Endothelial cell of umbilical vein (primary cell): ENCODE measurements at regions of chr5 and their contacts with region 1.

Region 1: GRCh38 chr5:122101636-122102285 is 23.7 kb upstream of the LOX start:
- DNase-seq: peak; percentile 64
- H3K4me3 ChIP-seq: no peak overlapping the region
- H3K27ac ChIP-seq: no peak overlapping the region
- H3K4me1 ChIP-seq: peaks cover 8% of the 10 kb centered on the region
- H3K27me3 ChIP-seq: no peaks in the 10 kb centered on the region
- CTCF ChIP-seq: peak; percentile 26 to 49
- POLR2A ChIP-seq: no peak

Region 2: GRCh38 chr5:120655828-120656435 is 1445.8 kb before region 1 on chr5:
- CTCF ChIA-PET with region 1: interaction called, 6 read pairs
- POLR2A ChIA-PET with region 1: no interaction called
- dilution Hi-C with region 1: no loop called
- intact Hi-C with region 1: loop called (anchors 2 kb)
- DNase-seq: peak; percentile 19
- H3K4me3 ChIP-seq: no peak overlapping the region
- H3K27ac ChIP-seq: no peak overlapping the region
- H3K4me1 ChIP-seq: no peaks in the 10 kb centered on the region
- H3K27me3 ChIP-seq: no peaks in the 10 kb centered on the region
- CTCF ChIP-seq: peak; percentile 36 to 57
- POLR2A ChIP-seq: no peak

Region 3: DNA sequence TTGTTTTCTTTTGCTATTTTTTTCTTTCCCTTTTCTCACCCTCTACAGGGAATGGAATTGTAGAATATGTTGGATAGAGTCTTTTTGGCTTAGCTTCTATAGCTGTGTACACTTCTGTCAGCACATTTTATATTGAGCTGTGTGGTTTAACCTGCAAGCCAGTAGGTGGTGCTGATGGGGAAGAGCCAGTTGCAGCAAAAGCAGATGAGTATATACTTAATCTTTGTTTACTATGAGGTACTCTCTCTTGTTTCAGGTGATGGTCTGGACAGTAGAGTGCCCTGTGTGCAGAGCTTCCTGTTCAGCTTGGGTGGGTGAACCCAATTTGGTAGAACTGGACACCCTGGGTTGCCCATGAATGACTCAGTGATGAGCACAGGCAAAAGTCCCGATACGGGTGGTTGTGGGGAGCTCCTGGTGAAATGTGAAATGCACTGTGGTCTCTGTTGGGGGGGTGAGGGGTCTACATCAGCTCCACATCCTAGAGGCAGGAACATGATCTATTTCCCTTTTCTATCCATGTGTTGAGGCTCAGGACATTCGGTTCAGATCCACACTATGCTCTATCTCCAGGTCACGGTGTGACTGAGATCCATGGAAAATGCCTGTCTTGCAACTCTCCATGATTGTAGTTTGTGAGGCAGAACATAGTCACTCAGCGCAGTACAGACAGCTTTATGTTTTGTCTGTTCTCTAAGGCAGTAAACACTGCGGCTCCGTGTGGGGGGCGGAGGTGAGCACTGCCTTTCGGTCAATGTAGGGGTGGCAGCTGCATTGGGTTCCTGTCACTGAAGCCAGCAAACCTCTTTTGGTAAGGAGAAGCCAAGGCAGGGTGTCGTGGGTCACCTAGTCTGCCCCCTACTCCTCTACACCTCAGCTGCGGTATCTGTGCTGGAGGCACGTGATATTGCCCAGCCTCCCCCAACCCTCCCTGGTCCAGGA is 1284.4 kb before region 1 on chr5:
- CTCF ChIA-PET with region 1: interaction called, 5 read pairs
- POLR2A ChIA-PET with region 1: no interaction called
- dilution Hi-C with region 1: no loop called
- intact Hi-C with region 1: loop called (anchors 5 kb)
- DNase-seq: peak; percentile 17
- H3K4me3 ChIP-seq: no peak overlapping the region
- H3K27ac ChIP-seq: no peak overlapping the region
- H3K4me1 ChIP-seq: no peaks in the 10 kb centered on the region
- H3K27me3 ChIP-seq: no peaks in the 10 kb centered on the region
- CTCF ChIP-seq: peak; percentile 31 to 46
- POLR2A ChIP-seq: no peak

Region 4: GRCh38 chr5:121962347-121962670 is 139.5 kb before region 1 on chr5:
- CTCF ChIA-PET with region 1: interaction called, 76 read pairs
- POLR2A ChIA-PET with region 1: no interaction called
- dilution Hi-C with region 1: no loop called
- intact Hi-C with region 1: loop called (anchors 1 kb)
- DNase-seq: peak; percentile 42
- H3K4me3 ChIP-seq: peak overlapping the region; percentile 79 to 95 (median 88)
- H3K27ac ChIP-seq: peak overlapping the region; percentile 86
- H3K4me1 ChIP-seq: peaks cover 14% of the 10 kb centered on the region
- H3K27me3 ChIP-seq: peaks cover 4 to 5% of the 10 kb centered on the region in 2 experiments
- CTCF ChIP-seq: no peak
- POLR2A ChIP-seq: no peak

Region 5: GRCh38 chr5:122063836-122064235 is 37.9 kb before region 1 on chr5:
- CTCF ChIA-PET with region 1: interaction called, 10 read pairs
- POLR2A ChIA-PET with region 1: no interaction called
- dilution Hi-C with region 1: no loop called
- intact Hi-C with region 1: no loop called
- DNase-seq: peak; percentile 41
- H3K4me3 ChIP-seq: no peak overlapping the region
- H3K27ac ChIP-seq: no peak overlapping the region
- H3K4me1 ChIP-seq: peaks cover 4% of the 10 kb centered on the region
- H3K27me3 ChIP-seq: no peaks in the 10 kb centered on the region
- CTCF ChIP-seq: no peak
- POLR2A ChIP-seq: no peak

Region 6: GRCh38 chr5:122156724-122157325 is 55.1 kb after region 1 on chr5:
- CTCF ChIA-PET with region 1: interaction called, 52 read pairs
- POLR2A ChIA-PET with region 1: no interaction called
- dilution Hi-C with region 1: no loop called
- intact Hi-C with region 1: no loop called
- DNase-seq: peak; percentile 42
- H3K4me3 ChIP-seq: no peak overlapping the region
- H3K27ac ChIP-seq: no peak overlapping the region
- H3K4me1 ChIP-seq: peaks cover 8% of the 10 kb centered on the region
- H3K27me3 ChIP-seq: no peaks in the 10 kb centered on the region
- CTCF ChIP-seq: peak in 1 of 2 donors; percentile 19
- POLR2A ChIP-seq: no peak